H1 (cell line): ENCODE measurements at regions of chr22 and their contacts with region 1.

Region 1: DNA sequence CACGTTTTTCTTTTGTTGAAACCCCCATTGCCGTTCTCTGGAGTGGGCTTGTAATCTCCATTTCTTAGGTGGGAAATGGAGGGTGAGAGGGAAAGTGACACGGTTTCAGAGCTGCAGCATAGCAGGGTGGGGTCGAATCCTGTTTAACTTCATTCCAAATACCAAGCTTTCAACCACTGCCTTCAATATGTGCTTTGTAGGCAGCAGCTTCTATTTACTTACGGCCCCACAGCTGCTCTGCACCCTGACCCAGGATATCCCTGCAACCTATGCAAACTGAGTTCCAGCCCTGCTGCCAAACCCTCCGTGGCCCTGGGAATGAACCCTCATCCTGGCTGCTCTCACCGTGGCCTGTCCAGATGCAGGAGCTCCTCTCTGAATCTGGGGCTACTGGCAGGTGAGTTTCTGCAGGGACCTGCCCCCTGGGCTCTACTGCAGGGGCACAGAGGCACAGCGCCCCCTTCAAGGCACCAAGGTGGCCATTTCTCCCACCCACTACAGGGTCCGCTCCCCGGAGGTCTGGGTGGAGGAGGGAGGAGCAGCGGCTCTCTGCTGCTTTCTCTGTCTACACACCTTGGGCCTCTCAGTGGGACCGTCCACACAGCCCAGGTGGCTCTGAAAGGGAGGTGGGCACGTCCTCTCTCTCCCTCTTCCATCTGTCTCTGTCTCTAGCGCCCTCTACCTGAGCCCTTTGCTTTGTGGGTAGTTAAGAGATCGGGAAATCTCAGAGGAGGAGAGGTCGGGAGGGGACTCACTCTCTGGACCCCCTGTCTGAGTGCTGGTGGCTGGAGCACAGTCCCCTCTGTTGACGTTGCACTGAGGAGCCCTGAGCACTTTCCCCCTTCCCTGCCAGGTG is 279.1 kb downstream of the BRD1 start:
- DNase-seq: peak in 1 of 2 experiments; percentile 76
- H3K4me3 ChIP-seq: no peak overlapping the region
- H3K27ac ChIP-seq: no peak overlapping the region
- H3K4me1 ChIP-seq: peaks cover 0 to 5% (median 3%) of the 10 kb centered on the region in 4 experiments; a peak in 6 of 7 replicates
- H3K27me3 ChIP-seq: no peaks in the 10 kb centered on the region; a peak in 2 of 7 replicates
- CTCF ChIP-seq: peak; percentile 34 to 77 (median 55)
- EP300 ChIP-seq: no peak
- POLR2A ChIP-seq: no peak
- RAD21 ChIP-seq: peak; percentile 63 to 79

Region 2: DNA sequence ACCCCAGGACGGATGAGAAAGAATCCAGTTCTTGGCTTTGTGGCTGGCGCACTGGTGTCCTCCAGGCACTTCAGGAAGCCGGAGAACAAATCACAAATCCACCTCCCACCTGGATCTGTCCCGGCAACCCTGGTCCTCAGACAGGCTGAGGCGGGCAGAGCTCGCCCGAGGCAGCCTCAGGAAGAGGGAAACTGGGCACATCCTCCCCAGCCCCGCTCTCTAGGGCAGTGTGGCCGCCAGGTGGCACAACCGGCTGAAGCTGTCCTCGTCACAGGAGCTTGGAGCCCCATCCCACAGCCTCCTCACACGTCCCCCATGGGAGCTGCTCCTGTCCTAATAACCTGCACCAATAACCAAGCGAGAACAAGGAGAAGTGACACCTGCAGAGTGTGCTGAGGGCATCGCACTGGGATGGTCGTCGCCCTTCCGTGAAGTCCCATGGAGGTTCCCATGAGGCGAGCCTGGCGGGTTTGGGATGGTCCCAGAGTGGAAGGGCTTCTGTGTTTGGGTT is 114.4 kb before region 1 on chr22:
- CTCF ChIA-PET with region 1: interaction called, 14 read pairs
- POLR2A ChIA-PET with region 1: interaction called, 4 read pairs
- DNase-seq: peak in 1 of 2 experiments; percentile 74
- H3K4me3 ChIP-seq: no peak overlapping the region
- H3K27ac ChIP-seq: no peak overlapping the region
- H3K4me1 ChIP-seq: peaks cover 0 to 1% (median under 1%) of the 10 kb centered on the region in 4 experiments; a peak in 2 of 7 replicates
- H3K27me3 ChIP-seq: no peaks in the 10 kb centered on the region
- CTCF ChIP-seq: peak; percentile 60 to 64 (median 64)
- EP300 ChIP-seq: no peak
- POLR2A ChIP-seq: no peak
- RAD21 ChIP-seq: peak; percentile 66 to 80

Region 3: DNA sequence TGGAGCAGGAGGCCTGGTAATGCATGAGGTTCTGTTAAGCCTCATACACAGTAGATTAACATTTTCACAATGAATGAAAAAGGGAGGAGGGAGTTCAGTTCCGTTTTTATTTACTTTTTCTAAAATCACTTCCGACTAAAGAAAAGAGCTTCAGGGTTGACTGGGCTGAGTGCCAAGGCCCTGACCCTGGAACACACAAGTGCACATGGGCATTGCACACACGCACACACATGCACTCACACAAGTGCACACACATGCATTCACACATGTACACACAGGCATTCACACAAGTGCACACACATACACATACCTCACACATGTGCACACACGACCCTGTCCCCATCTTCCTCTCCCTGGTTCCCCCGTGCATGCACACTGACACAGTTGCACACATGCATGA is 24.2 kb before region 1 on chr22:
- CTCF ChIA-PET with region 1: interaction called, 15 read pairs
- POLR2A ChIA-PET with region 1: no interaction called
- DNase-seq: no peak
- H3K4me3 ChIP-seq: no peak overlapping the region
- H3K27ac ChIP-seq: no peak overlapping the region
- H3K4me1 ChIP-seq: peaks cover 0 to 16% (median 7%) of the 10 kb centered on the region in 4 experiments; a peak in 6 of 7 replicates
- H3K27me3 ChIP-seq: no peaks in the 10 kb centered on the region
- CTCF ChIP-seq: no peak
- EP300 ChIP-seq: no peak
- POLR2A ChIP-seq: no peak
- RAD21 ChIP-seq: no peak